Activated B cell treated with CpG ODN at 0.5 μM for 24 hours (primary cell): ENCODE measurements at regions of chr19 and their contacts with region 1.

Region 1: GRCh38 chr19:48637170-48637947 is at the start of gene DBP:
- DNase-seq: peak; percentile 97
- ATAC-seq: peak; percentile 72
- H3K4me3 Mint-ChIP-seq: peak within 1 kb of the TSS; percentile 93
- H3K27ac Mint-ChIP-seq: peak within 1 kb of the TSS; percentile 99
- H3K4me1 Mint-ChIP-seq: peaks cover 68% of the 10 kb centered on the region
- H3K27me3 Mint-ChIP-seq: no peaks in the 10 kb centered on the region
- CTCF ChIP-seq: no peak
- total RNA-seq, gene DBP: 8.7 and 9.2 TPM in 2 replicates

Region 2: DNA sequence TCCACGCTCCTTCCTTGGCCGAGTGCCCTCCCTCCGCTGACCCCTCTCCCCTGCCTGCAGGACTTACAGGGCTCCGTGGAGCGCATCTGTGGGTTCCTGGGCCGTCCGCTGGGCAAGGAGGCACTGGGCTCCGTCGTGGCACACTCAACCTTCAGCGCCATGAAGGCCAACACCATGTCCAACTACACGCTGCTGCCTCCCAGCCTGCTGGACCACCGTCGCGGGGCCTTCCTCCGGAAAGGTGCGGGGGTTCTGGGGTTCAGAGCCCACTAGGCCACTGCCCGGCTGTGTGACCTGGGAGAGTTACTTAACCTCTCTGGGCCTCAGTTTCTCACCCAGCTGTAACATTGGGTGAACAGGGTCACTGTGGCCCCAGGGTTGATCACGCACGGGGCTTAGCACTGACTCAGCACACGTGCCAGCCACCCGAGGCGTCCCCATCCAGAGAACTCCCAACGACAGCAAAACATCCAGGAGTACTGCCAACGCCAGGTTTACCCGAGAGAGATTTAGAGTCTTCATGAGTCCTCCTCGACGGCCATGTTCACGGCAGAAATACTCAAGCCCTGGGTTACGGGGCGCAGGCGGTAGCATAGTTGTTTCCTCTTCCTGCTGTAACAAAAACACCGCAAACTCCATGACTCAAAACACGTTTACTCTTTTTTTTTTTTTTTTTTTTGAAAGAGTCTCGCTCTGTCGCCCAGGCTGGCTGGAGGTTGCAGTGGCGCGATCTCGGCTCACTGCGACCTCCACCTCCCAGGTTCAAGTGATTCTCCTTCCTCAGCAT is 40.5 kb before region 1 on chr19:
- CTCF ChIA-PET with region 1: no interaction called
- POLR2A ChIA-PET with region 1: no interaction called
- intact Hi-C with region 1: no loop called
- DNase-seq: no peak
- ATAC-seq: peak; percentile 73
- H3K4me3 Mint-ChIP-seq: peak overlapping the region; percentile 28
- H3K27ac Mint-ChIP-seq: no peak overlapping the region
- H3K4me1 Mint-ChIP-seq: no peaks in the 10 kb centered on the region
- H3K27me3 Mint-ChIP-seq: no peaks in the 10 kb centered on the region
- CTCF ChIP-seq: no peak

Region 3: DNA sequence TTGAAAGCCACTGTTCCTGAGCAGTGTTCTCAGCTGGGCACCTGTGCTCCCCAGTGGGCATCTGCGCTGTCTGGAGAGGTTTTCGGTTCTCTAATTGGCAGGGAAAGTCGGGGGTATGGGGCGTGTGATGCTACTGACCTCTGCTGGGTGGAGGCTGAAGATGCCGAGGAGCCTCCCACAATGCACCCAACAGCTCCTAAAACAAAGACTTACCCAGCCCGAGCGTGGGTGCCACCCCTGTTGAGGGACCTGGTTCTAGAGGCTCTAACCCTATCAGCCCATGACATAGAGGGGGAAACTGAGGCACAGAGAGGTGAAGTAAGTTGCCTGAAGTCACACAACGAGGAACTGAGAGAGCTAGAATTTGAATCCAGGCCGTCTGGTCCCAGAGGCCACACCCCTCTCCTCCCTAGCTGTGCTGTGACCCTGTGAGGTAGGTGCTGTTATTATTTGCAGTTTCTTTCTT is 28.5 kb before region 1 on chr19:
- CTCF ChIA-PET with region 1: no interaction called
- POLR2A ChIA-PET with region 1: interaction called, 19 read pairs
- intact Hi-C with region 1: no loop called
- DNase-seq: peak; percentile 52
- ATAC-seq: peak; percentile 98
- H3K4me3 Mint-ChIP-seq: peak overlapping the region; percentile 52
- H3K27ac Mint-ChIP-seq: peak overlapping the region; percentile 59
- H3K4me1 Mint-ChIP-seq: peaks cover 8% of the 10 kb centered on the region
- H3K27me3 Mint-ChIP-seq: no peaks in the 10 kb centered on the region
- CTCF ChIP-seq: no peak

Region 4: DNA sequence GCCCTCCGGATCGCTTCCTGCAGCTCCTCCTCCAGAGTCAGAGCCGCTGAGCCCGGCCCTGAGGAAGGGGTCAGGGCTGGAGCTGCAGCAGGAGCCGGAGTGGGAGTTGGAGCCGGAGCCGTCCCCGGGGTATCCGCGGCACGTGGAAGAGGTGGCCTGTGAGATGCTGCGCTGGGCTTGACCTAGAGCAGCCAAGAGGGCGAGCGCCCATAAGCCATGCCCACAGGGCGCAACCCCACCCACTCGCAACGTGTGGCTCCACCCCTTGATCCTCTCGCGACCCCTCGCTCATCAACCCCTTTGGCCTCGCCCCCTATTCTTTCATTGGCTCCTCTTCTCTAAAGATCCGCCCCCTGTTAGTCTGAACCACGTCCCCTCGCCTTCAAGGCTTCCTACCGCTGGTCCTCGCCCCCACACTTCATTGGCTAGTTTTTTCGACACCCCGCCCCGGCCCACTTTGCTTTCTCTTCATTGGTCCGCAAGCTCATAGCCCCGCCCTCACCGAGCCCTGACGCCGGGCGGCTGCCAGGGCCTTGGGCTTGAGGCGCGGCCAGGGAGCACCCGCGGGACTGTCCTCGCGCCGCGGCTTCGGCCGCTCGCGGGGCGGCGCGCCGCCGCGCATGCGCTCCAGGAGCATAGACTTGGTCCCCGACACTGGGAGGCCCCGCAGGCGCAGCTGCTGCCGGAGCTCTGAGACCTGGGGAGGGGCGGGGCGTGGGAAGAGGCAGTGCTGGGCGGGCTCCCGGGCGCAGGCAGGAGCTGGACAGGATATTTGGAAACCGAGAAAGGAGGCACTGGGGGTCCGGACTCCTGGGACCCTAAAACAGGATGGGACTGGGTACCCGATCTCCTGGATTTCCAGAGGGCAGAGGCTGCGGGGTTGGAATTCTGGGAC is 76.8 kb after region 1 on chr19:
- CTCF ChIA-PET with region 1: no interaction called
- POLR2A ChIA-PET with region 1: interaction called, 3 read pairs
- intact Hi-C with region 1: loop called (anchors 1 kb)
- DNase-seq: peak; percentile 94
- ATAC-seq: peak; percentile 91
- H3K4me3 Mint-ChIP-seq: peak overlapping the region; percentile 81
- H3K27ac Mint-ChIP-seq: peak overlapping the region; percentile 77
- H3K4me1 Mint-ChIP-seq: peaks cover 25% of the 10 kb centered on the region
- H3K27me3 Mint-ChIP-seq: no peaks in the 10 kb centered on the region
- CTCF ChIP-seq: no peak

Region 5: DNA sequence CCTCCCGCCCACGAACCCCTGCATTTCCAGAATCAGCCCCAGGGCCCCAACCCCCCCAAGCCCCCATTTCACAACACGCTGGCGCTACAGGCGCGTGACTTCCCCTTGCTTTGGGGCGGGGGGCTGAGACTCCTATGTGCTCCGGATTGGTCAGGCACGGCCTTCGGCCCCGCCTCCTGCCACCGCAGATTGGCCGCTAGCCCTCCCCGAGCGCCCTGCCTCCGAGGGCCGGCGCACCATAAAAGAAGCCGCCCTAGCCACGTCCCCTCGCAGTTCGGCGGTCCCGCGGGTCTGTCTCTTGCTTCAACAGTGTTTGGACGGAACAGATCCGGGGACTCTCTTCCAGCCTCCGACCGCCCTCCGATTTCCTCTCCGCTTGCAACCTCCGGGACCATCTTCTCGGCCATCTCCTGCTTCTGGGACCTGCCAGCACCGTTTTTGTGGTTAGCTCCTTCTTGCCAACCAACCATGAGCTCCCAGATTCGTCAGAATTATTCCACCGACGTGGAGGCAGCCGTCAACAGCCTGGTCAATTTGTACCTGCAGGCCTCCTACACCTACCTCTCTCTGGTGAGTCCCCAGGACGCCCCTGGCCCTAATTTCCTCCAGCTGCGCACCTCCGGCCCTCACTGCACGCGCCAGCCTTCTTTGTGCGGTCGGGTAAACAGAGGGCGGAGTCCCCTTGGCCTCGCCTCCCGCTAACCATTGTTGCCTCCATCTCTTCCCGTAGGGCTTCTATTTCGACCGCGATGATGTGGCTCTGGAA is 327.9 kb after region 1 on chr19 and contains the start of gene FTL:
- CTCF ChIA-PET with region 1: no interaction called
- POLR2A ChIA-PET with region 1: interaction called, 6 read pairs
- intact Hi-C with region 1: loop called (anchors 2 kb)
- DNase-seq: peak; percentile 88
- ATAC-seq: peak; percentile 80
- H3K4me3 Mint-ChIP-seq: peak within 1 kb of the TSS; percentile 99
- H3K27ac Mint-ChIP-seq: peak within 1 kb of the TSS; percentile 99
- H3K4me1 Mint-ChIP-seq: peaks cover 70% of the 10 kb centered on the region
- H3K27me3 Mint-ChIP-seq: no peaks in the 10 kb centered on the region
- CTCF ChIP-seq: no peak
- total RNA-seq, gene FTL: 888 and 935 TPM in 2 replicates

Region 6: GRCh38 chr19:49118565-49119410 is 481.4 kb after region 1 on chr19 and contains the start of gene C19orf73:
- CTCF ChIA-PET with region 1: no interaction called
- POLR2A ChIA-PET with region 1: no interaction called
- intact Hi-C with region 1: loop called (anchors 10 kb)
- DNase-seq: peak; percentile 96
- ATAC-seq: peak; percentile 82
- H3K4me3 Mint-ChIP-seq: peak within 1 kb of the TSS; percentile 84
- H3K27ac Mint-ChIP-seq: peak within 1 kb of the TSS; percentile 87
- H3K4me1 Mint-ChIP-seq: peaks cover 44% of the 10 kb centered on the region
- H3K27me3 Mint-ChIP-seq: peaks cover 7% of the 10 kb centered on the region
- CTCF ChIP-seq: no peak
- total RNA-seq, gene C19orf73: 0.98 and 1.0 TPM in 2 replicates

Region 7: GRCh38 chr19:49817964-49818648 is 1180.7 kb after region 1 on chr19 and contains the start of gene MED25:
- CTCF ChIA-PET with region 1: no interaction called
- POLR2A ChIA-PET with region 1: interaction called, 3 read pairs
- intact Hi-C with region 1: loop called (anchors 2 kb)
- DNase-seq: peak; percentile 91
- ATAC-seq: peak; percentile 59
- H3K4me3 Mint-ChIP-seq: peak within 1 kb of the TSS; percentile 98
- H3K27ac Mint-ChIP-seq: peak within 1 kb of the TSS; percentile 99
- H3K4me1 Mint-ChIP-seq: peaks cover 40% of the 10 kb centered on the region
- H3K27me3 Mint-ChIP-seq: no peaks in the 10 kb centered on the region
- CTCF ChIP-seq: no peak
- total RNA-seq, gene MED25: 70.1 and 88.8 TPM in 2 replicates